CD14-positive monocyte (primary cell): ENCODE measurements at regions of chrX and their contacts with region 1.

Region 1: DNA sequence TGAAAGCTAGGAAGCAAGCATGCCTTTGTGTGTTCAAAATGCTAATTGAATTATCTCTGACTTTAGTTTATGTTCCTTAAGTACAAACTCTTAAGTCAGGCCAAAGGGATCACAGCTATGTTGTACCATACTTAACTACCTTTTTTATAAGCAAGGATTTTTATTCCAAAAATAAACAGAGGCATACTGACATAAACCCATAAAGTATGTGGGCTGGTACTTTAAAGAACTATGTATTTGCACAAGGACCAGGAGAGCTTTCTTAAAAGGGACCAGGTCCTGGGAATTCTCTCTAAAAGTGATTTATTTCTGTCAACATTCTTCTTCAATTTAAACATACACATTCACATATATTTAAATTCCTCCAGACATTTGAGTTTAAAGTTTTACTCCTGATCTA is 57.7 kb upstream of the HCCS start:
- DNase-seq: no peak
- H3K4me3 ChIP-seq: no peak overlapping the region
- H3K4me3 Mint-ChIP-seq: no peak overlapping the region
- H3K27ac ChIP-seq: no peak overlapping the region
- H3K27ac Mint-ChIP-seq: no peak overlapping the region
- H3K4me1 ChIP-seq: no peaks in the 10 kb centered on the region
- H3K4me1 Mint-ChIP-seq: no peaks in the 10 kb centered on the region
- H3K27me3 ChIP-seq: no peaks in the 10 kb centered on the region
- H3K27me3 Mint-ChIP-seq: peaks cover 0 to 1% (median 0%) of the 10 kb centered on the region in 3 donors
- CTCF ChIP-seq: no peak

Region 2: DNA sequence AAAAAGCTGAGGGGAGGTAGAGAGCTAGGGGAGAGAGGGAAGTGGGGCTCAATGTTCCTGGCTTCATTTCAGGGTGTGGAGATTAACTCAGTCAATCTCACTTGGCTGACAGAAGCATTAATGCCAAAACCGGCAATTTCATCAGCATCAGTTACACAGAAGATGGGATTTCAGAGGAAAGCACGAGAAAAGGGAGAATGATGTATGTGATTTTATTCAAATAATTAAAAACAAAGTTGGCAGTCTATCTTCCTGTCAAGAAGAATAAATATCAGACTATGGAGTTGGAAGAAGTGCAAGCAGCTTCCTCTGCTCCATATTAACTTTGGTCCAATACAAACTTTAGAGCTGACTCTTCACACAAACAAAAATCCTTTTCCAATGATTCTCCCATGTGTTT is 28.1 kb after region 1 on chrX:
- intact Hi-C with region 1: loop called in 1 of 2 experiments (anchors 2 kb)
- DNase-seq: no peak
- H3K4me3 ChIP-seq: no peak overlapping the region
- H3K4me3 Mint-ChIP-seq: no peak overlapping the region
- H3K27ac ChIP-seq: no peak overlapping the region
- H3K27ac Mint-ChIP-seq: no peak overlapping the region
- H3K4me1 ChIP-seq: no peaks in the 10 kb centered on the region
- H3K4me1 Mint-ChIP-seq: no peaks in the 10 kb centered on the region
- H3K27me3 ChIP-seq: no peaks in the 10 kb centered on the region
- H3K27me3 Mint-ChIP-seq: peaks cover 0 to 2% (median 0%) of the 10 kb centered on the region in 3 donors
- CTCF ChIP-seq: no peak